OCI-LY7 (cell line): ENCODE measurements at regions of chr9 and their contacts with region 1.

Region 1: GRCh38 chr9:32533336-32533735 is 7.3 kb upstream of the RIGI start:
- DNase-seq: no peak
- H3K4me3 ChIP-seq: no peak overlapping the region
- H3K27ac ChIP-seq: no peak overlapping the region
- H3K4me1 ChIP-seq: no peaks in the 10 kb centered on the region
- CTCF ChIP-seq: no peak

Region 2: DNA sequence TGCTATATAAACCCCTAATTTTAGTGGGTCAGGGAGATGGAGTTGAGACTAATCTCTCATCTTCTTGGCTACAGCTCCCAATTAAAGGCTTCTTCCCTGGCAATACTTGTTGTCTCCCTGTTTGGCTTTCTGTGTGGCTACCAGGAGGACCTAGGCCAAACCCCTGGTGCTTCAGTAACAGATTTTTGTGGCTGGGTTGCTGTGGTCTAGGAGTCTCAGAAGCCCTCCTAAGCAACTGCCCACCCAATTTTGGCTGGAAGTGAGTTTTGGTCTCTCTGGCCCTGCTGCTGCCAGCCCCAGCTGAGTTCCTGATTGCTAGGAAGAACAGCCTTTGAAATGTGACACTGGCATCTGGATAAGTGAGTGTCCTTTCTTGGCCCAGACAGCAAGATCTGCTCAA is 17.1 kb before region 1 on chr9:
- CTCF ChIA-PET with region 1: no interaction called
- POLR2A ChIA-PET with region 1: no interaction called
- intact Hi-C with region 1: loop called (anchors 2 kb)
- DNase-seq: no peak
- H3K4me3 ChIP-seq: no peak overlapping the region
- H3K27ac ChIP-seq: no peak overlapping the region
- H3K4me1 ChIP-seq: no peaks in the 10 kb centered on the region
- CTCF ChIP-seq: no peak